Sigmoid colon (tissue), 7 donors: ENCODE measurements at regions of chr2 and their contacts with region 1.

Region 1: DNA sequence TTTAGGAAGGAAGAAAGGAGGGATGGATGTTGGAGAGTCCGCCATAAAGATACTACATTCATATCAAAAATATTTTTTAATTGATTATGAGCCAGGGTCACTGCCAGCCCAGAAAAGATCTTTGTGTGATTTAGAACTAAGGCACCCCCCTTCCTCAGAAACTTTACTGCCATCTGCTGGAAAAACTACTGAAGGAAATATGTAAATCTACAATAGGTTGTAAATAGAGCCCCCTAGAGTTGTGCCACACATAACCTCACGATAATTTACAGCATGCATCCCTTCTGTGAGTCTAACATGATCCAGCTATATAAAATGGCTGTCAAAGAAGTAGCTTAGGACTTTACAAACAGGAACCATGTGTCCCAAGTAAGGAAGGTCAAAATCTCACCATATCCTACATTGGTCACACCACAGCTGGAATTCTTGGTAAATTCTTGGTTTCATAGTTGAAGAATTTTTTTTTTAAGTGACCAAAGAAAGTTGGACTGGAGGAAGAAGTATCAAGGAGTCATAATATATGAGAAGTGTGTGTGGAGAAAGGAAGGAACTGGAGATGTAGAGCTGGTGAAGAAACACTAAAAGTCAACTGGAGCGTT is 152.5 kb downstream of the CYP26B1 start:
- DNase-seq: no peak
- H3K4me3 ChIP-seq: no peak overlapping the region
- H3K27ac ChIP-seq: no peak overlapping the region
- H3K4me1 ChIP-seq: no peaks in the 10 kb centered on the region
- H3K27me3 ChIP-seq: no peaks in the 10 kb centered on the region
- CTCF ChIP-seq: peak in 3 of 4 experiments; percentile 34 to 50 (median 42)
- EP300 ChIP-seq: no peak
- POLR2A ChIP-seq: no peak

Region 2: GRCh38 chr2:71545572-71546274 is 449.4 kb before region 1 on chr2:
- intact Hi-C with region 1: loop called (anchors 5 kb)
- DNase-seq: peak; percentile 70
- H3K4me3 ChIP-seq: no peak overlapping the region
- H3K27ac ChIP-seq: no peak overlapping the region
- H3K4me1 ChIP-seq: no peaks in the 10 kb centered on the region
- H3K27me3 ChIP-seq: no peaks in the 10 kb centered on the region
- CTCF ChIP-seq: peak; percentile 28 to 61 (median 46)
- EP300 ChIP-seq: no peak
- POLR2A ChIP-seq: no peak

Region 3: DNA sequence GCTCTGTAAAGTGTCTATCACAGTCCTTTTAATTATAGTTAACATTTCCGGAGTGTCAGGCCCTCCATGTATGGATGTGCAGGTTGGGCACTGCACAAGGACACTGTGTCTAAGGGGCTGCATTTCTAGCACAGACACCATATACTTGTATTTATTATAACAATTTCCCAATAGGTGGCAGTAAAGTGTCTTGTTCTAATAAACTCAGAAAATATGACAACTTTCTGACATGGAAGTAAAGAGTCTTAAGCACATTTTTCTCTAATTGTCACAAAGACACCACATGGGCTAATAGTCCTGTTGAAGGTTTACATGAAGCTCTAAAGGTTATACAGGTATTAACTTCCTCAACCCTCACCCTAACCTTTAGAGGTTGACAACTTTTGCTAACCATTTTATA is 385.2 kb before region 1 on chr2:
- intact Hi-C with region 1: loop called (anchors 5 kb)
- DNase-seq: peak; percentile 32
- H3K4me3 ChIP-seq: no peak overlapping the region
- H3K27ac ChIP-seq: no peak overlapping the region
- H3K4me1 ChIP-seq: peaks cover 0 to 13% (median 13%) of the 10 kb centered on the region in 4 donors
- H3K27me3 ChIP-seq: no peaks in the 10 kb centered on the region
- CTCF ChIP-seq: peak in 2 of 4 experiments; percentile 18 to 22
- EP300 ChIP-seq: no peak
- POLR2A ChIP-seq: no peak

Region 4: DNA sequence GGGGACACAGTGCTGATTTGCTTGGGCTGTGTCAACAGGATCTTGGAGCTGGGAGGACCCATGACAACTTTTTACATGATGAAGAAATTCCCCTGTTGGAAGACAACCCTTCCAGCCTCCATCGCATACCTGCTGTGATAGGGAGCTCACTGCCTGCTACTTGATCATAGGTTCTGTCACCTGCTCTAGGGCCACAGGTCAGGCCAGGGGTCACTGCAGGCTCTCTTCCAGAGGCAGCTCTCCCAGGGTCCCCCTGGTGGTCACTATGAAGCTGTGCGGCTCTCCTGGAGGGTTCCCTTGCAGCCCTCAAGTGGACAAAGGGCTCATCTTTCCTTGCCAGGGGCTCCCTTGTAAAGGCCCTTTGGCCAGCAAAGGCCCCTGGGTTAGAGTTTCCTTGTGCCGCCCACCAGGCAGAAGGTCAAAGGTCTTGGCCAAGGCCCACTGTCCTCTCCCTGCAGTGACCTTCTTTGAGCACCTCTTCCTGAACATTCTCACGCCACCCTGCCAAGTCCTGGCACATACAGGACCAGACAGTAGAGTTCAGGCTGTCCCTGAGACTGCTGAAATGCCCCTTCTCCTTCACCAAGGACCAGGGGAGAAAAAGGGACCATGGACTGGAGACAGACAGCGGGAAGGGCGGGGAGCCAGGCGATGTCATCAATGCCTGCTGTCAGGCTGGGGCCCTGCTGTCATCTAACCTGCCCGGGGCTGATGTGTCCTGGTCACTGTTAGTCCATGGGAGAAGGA is 196.7 kb before region 1 on chr2:
- intact Hi-C with region 1: loop called (anchors 10 kb)
- DNase-seq: peak; percentile 57
- H3K4me3 ChIP-seq: no peak overlapping the region
- H3K27ac ChIP-seq: no peak overlapping the region
- H3K4me1 ChIP-seq: peaks cover 0 to 3% (median 0%) of the 10 kb centered on the region in 4 donors
- H3K27me3 ChIP-seq: no peaks in the 10 kb centered on the region
- CTCF ChIP-seq: peak in 3 of 4 experiments; percentile 40 to 63 (median 45)
- EP300 ChIP-seq: no peak
- POLR2A ChIP-seq: no peak

Region 5: DNA sequence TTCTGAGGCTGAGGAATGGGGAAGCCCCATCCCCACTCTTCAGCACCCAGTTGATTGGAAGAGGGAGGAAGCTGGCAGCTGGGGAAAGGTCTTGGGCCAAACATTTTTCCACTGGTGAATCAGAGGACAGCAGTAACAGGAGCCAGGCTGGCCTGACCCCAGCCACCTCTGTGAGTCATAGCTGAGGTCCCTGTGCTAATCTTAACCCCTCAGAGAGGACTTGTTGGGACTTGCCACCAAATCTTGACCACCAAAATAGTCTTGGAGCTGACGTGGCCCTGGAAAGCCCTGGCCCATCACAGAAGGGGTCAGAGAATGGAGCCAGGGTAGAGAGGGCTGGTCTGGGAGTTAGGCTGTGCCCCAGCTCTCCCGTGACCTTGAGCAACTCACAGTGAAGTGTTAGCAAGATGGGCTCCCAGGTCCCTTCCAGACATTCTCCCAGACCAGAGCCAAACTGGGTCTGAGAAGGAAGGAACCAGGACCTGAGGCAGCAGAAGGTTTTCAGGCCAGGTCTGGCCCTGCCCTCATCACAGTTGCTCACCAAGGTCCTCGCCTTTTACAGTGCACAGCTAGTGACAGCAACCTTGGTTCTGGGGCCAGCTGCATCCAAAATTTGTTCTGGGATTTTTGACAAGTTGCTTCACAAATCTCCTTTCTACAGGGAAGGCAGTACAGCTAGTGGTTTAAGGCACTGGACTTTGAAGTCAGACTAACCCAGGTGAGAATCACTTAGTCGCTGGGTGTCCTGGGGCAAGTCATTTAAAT is 114.1 kb before region 1 on chr2:
- intact Hi-C with region 1: no loop called
- DNase-seq: peak; percentile 77
- H3K4me3 ChIP-seq: no peak overlapping the region
- H3K27ac ChIP-seq: no peak overlapping the region
- H3K4me1 ChIP-seq: peaks cover 0 to 23% (median 8%) of the 10 kb centered on the region in 4 donors
- H3K27me3 ChIP-seq: no peaks in the 10 kb centered on the region
- CTCF ChIP-seq: no peak
- EP300 ChIP-seq: no peak
- POLR2A ChIP-seq: no peak

Region 6: DNA sequence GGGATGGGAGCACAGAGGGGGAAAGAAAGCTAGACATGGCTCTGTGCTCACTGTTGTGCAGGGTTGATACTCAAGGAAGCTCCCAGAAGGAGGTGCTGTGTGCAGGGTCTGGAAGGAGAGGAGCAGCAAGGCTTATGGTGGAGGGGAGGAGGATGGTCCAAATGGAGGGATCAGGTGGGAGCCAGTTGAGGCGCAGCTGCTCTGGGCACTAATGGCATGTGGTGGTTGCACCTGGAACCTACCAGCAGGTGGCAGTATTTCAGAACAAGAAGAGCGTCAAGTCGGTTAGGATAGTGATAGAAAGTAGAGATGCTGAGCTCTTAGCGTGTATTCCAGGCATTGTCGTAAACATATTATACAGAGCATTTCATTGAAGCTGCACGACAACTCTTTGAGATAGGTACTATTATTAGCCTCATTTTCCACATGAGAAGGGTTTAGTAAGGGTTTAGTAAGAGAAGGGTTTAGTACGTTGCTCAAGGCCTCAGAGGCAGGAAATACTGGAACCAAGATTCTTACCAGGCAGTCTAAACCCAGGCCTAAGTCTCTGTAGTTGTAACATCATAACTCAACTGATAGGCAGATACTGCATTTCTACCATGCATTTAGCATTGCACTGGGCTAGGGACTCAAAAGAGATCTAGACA is 71.2 kb before region 1 on chr2:
- intact Hi-C with region 1: loop called (anchors 5 kb)
- DNase-seq: no peak
- H3K4me3 ChIP-seq: no peak overlapping the region
- H3K27ac ChIP-seq: peak overlapping the region in 1 of 4 donors; percentile 74
- H3K4me1 ChIP-seq: peaks cover 0 to 28% (median 21%) of the 10 kb centered on the region in 4 donors
- H3K27me3 ChIP-seq: no peaks in the 10 kb centered on the region
- CTCF ChIP-seq: peak; percentile 65 to 88 (median 74)
- EP300 ChIP-seq: no peak
- POLR2A ChIP-seq: no peak

Region 7: DNA sequence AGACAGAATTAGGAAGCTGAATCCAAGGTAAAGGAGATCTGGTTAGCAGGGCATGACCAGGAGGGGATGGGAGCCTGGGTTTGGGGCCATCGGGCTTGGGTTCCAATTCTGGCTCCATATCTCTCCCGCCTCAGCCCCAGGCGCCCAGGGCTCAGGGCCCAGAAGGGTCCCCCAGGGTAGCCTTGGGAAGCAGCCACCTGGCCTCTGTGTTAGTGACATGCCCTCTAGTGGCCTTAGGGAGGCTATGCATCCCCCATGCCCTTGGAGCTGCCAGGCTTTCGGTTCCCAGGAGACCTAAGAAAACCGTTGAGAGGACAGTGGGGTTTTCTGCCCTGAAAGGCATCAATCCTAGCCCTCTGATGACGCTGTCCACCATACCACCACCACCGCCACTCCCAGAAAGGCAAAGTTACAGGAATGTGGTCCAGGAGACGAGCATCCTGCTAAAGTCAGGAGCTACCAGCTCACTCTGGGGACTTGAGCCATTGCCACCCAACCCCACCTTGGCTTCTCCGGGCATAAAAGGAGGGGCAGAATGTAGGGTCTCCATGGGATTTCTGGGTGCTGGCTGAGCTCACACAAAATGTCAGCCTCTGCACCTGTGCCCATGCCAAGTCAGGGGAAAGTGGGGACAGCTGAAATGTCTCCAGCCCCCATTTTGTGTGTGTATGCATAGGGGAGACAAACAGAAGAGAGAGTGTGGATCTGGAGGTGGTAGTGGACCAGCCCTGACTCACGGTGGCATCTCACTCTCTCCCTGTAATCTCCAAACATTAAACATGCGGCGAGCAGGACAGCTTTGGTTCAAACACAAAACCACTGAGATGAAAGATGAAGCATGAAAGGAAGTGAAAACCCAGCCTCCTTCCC is 978.6 kb after region 1 on chr2:
- intact Hi-C with region 1: no loop called
- DNase-seq: no peak
- H3K4me3 ChIP-seq: no peak overlapping the region
- H3K27ac ChIP-seq: no peak overlapping the region
- H3K4me1 ChIP-seq: no peaks in the 10 kb centered on the region
- H3K27me3 ChIP-seq: no peaks in the 10 kb centered on the region
- CTCF ChIP-seq: peak in 3 of 4 experiments; percentile 30 to 70 (median 55)
- EP300 ChIP-seq: no peak
- POLR2A ChIP-seq: no peak